ENCODE measurements at regions of chr12 and their contacts with region 1.

Region 1: DNA sequence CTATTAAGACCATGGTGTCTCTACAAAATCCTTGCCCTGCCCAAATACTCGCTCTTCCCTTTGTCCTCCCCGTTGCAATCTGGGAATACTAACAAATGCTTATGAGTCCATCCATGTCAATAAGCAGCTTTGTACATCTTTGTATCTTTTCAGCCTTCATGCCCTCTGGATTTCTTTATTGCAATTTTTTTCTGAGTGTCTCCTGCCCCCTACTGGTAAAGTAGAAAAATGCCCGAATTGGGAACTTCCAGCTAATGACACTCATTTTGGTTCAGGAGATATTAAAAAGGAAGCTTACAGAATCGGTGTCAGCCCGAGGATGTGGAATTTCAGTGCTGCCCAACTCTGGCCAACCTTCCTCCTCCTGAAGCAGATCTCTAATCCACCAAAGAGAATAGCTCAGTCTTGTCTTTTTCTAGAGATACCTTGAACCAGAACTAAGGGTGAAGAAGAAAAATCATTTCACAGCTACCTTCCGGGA is 46.0 kb downstream of the SH2B3 start:
- DNase-seq: peak; percentile 16
- H3K4me3 Mint-ChIP-seq: no peak overlapping the region
- H3K27ac Mint-ChIP-seq: no peak overlapping the region
- H3K4me1 Mint-ChIP-seq: peaks cover 43% of the 10 kb centered on the region
- H3K27me3 Mint-ChIP-seq: no peaks in the 10 kb centered on the region

Region 2: GRCh38 chr12:111211910-111212757 is 239.6 kb before region 1 on chr12:
- CTCF ChIA-PET with region 1: no interaction called
- POLR2A ChIA-PET with region 1: no interaction called
- DNase-seq: no peak
- H3K4me3 Mint-ChIP-seq: no peak overlapping the region
- H3K27ac Mint-ChIP-seq: no peak overlapping the region
- H3K4me1 Mint-ChIP-seq: no peaks in the 10 kb centered on the region
- H3K27me3 Mint-ChIP-seq: peaks cover 2% of the 10 kb centered on the region

Region 3: DNA sequence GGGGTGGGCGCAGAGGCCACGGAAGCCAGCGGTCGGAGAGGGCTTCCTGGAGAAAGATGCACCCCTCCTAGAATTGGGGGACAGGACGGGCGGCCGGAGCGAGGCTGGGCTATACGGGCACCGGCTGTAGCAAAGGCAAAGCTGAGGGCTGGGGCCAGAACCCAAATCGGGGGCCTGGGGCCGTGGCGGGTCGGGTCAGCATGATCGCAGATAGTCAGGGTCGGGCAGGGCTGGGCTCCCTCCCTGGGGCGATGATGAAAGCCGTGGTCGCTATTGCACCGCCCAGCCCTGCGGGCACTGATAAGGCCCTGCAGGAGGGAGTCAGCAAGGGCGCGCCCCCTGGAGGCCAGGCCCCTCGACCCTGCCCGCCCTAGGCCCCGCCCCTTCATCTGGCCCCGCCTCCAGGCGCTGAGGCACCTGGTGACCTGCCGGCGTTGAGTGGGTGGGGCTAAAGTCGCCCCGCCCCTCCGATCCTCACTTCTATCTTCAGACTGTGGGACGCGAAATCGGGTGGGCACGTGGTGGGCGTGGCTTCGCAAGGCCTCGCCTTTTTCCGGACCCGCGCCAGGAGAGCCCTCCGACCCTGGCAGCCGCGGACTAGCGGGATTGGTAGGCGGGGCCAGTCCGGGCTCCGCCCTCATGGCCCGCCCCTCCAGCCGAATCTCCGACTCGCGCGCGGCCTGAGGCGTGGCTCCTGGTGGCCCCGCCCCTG is 46.4 kb before region 1 on chr12:
- CTCF ChIA-PET with region 1: interaction called, 527 read pairs
- POLR2A ChIA-PET with region 1: interaction called, 257 read pairs
- DNase-seq: peak; percentile 98
- H3K4me3 Mint-ChIP-seq: peak overlapping the region; percentile 81
- H3K27ac Mint-ChIP-seq: peak overlapping the region; percentile 72
- H3K4me1 Mint-ChIP-seq: peaks cover 62% of the 10 kb centered on the region
- H3K27me3 Mint-ChIP-seq: peaks cover 29% of the 10 kb centered on the region

Region 4: DNA sequence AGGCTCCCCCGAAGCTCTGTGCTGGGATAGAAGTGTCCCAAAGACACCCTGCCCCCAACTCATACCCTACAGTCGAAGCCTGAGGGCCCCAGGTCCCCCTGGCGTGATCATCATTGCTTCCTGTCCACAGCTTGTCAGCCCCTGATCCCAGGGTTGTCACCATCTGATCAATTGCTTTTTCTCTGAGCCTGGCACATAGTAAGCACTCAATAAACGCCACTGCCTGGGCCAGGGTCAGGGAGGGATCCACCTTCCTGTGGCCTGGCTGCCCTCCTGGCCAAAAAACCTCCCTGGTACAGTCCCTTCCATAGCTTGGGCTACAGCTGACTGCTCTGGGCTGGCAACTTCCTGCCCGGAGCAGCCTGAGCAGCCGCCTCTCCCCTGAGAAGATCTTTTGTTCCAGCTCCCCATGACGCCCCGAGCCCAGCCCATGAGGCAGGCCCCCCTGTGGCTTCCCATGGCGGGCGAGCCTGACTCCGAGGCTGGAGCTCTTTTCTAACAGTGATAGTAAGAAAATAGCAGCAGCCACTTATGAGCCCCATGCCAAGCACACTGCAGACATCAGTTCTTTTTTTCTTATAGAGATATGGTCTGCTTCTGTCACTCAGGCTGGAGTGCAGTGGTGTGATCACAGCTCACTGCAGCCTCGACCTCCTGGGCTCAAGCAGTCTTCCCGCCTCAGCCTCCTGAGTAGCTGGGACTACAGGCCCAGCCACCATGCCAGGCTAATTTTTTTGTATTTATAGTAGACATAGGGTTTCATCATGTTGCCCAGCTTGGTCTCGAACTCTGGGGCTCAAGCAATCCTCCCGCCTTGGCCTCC is 39.5 kb before region 1 on chr12:
- CTCF ChIA-PET with region 1: interaction called, 13 read pairs
- POLR2A ChIA-PET with region 1: interaction called, 257 read pairs
- DNase-seq: no peak
- H3K4me3 Mint-ChIP-seq: no peak overlapping the region
- H3K27ac Mint-ChIP-seq: peak overlapping the region; percentile 72
- H3K4me1 Mint-ChIP-seq: peaks cover 66% of the 10 kb centered on the region
- H3K27me3 Mint-ChIP-seq: no peaks in the 10 kb centered on the region

Region 5: GRCh38 chr12:111434680-111435338 is 16.9 kb before region 1 on chr12:
- CTCF ChIA-PET with region 1: interaction called, 42 read pairs
- POLR2A ChIA-PET with region 1: interaction called, 252 read pairs
- DNase-seq: peak; percentile 82
- H3K4me3 Mint-ChIP-seq: peak overlapping the region; percentile 71
- H3K27ac Mint-ChIP-seq: peak overlapping the region; percentile 97
- H3K4me1 Mint-ChIP-seq: peaks cover 90% of the 10 kb centered on the region
- H3K27me3 Mint-ChIP-seq: peaks cover 2% of the 10 kb centered on the region

Region 6: DNA sequence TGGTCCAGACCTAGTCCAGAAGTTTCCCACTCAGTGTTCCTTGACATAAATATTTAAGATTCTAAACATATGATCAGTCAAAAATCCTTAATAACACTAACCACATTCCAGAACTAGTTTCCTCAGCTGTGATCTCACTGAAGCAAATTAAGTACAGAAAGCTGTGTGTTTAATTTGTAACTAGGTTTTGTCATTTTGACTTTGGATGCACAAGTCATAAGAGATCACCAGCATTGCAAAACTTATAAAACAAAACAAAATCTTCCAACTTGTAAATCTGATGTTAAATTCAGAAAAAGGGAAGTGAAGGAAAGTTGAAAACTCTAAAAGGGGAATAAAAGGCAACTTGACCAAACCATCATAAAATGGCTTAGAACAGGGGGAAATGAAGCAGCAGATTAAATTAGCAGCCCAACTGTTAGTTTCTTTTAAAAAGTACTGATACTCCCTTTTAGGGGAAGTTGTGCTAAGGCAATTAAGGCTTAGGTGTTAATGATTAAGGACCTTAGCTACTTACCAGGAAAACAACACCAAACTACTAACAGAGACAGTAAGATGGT is 10.6 kb after region 1 on chr12:
- CTCF ChIA-PET with region 1: interaction called, 22 read pairs
- POLR2A ChIA-PET with region 1: no interaction called
- DNase-seq: no peak
- H3K4me3 Mint-ChIP-seq: no peak overlapping the region
- H3K27ac Mint-ChIP-seq: no peak overlapping the region
- H3K4me1 Mint-ChIP-seq: peaks cover 4% of the 10 kb centered on the region
- H3K27me3 Mint-ChIP-seq: no peaks in the 10 kb centered on the region

Region 7: DNA sequence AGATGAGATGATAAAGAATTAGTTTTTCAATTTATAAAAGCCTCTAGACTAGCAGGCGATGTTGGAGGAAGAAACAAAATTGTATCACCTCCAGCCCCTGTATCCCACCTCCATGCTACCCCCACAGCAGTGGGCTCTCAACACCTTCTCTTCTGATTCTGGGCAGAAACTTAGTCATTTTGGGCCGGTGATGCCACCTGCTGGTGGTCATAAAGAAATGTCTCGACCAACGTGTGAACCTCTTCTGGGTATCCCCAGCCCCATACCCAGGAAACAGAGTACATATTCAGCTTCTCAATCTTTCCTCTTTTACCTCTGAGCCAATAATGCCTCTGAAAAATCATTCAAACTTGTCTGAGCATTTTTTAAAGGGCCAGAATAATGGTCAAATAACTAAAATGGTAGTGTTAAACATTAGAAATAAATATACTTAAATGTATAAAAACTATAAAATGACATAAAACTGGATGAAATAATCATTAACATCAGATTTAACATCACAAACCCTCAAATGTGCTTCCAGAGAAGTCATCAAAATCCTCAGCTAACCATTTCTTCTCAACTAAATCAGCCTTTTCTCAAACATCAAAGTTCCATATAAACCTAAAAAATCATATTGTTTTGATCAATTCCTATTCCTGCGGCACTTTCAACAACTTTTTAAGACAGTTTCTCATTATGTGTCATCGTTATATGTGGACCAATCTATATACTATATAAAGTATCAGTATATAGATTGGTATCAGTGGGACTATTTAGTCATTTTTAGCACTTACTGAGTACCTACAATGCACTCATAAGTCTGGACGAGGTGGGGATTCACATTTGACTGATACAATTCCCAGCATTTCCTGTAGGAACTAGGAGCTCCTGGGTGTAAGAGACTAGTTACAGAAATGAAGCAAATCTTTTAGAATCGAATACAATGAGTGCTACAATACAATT is 78.0 kb after region 1 on chr12:
- CTCF ChIA-PET with region 1: interaction called, 12 read pairs
- POLR2A ChIA-PET with region 1: interaction called, 3 read pairs
- DNase-seq: peak; percentile 68
- H3K4me3 Mint-ChIP-seq: no peak overlapping the region
- H3K27ac Mint-ChIP-seq: no peak overlapping the region
- H3K4me1 Mint-ChIP-seq: peaks cover 10% of the 10 kb centered on the region
- H3K27me3 Mint-ChIP-seq: no peaks in the 10 kb centered on the region

Region 8: GRCh38 chr12:111868676-111869588 is 417.2 kb after region 1 on chr12:
- CTCF ChIA-PET with region 1: no interaction called
- POLR2A ChIA-PET with region 1: no interaction called
- DNase-seq: no peak
- H3K4me3 Mint-ChIP-seq: no peak overlapping the region
- H3K27ac Mint-ChIP-seq: no peak overlapping the region
- H3K4me1 Mint-ChIP-seq: no peaks in the 10 kb centered on the region
- H3K27me3 Mint-ChIP-seq: no peaks in the 10 kb centered on the region

Measured in activated CD4-positive, alpha-beta memory T cell treated with anti-CD3 and anti-CD28 coated beads, Interleukin-2, amount 10 ng/mL, durations not matched to agents 7 days and 5 days (primary cell).